ENCODE measurements at regions of chr3 and their contacts with region 1.

Region 1: DNA sequence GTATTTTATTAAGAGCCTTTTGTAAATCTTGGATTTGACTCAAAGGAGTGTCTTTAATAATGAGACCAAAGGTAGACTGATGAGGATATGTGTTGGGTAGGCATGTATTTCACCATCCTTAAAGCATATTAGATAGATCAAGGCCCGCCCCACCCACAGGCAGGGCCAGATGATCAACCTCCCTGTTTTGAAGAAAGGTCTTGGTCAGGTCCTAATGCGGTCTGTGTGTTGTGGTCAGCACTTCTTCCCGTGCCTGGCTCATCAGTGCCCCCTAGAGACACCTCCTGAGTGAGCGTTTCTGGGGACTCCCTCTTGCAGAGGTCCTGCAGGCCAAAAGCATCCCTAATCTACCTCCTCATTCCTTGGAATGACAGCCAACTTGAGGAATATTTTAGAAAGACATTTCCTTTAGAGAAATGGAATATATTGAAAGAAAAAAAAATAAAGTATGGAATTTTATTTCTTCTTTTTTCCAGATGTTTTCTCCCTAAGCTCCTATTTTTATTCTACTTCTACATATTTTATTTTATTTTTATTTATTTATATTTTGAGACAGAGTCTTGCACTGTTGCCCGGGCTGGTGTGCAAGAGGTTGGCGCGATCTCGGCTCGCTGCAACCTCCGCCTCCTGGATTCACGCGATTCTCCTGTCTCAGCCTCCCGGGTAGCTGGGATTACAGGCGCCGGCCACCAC is 6.0 kb downstream of the TM4SF4 start:
- DNase-seq: peak; percentile 75 to 84 (median 81)
- ATAC-seq: peak; percentile 84 to 98 (median 95)
- H3K4me3 ChIP-seq: no peak overlapping the region
- H3K27ac ChIP-seq: peak overlapping the region; percentile 35 to 79 (median 68)
- H3K4me1 ChIP-seq: peaks cover 0 to 19% (median 10%) of the 10 kb centered on the region in 12 donors
- H3K27me3 ChIP-seq: no peaks in the 10 kb centered on the region
- CTCF ChIP-seq: peak; percentile 74 to 94 (median 85)
- POLR2A ChIP-seq: no peak

Region 2: GRCh38 chr3:149114458-149114857 is 366.0 kb before region 1 on chr3:
- intact Hi-C with region 1: loop called in 1 of 10 experiments (anchors 5 kb)
- DNase-seq: no peak
- ATAC-seq: peak in 1 of 4 donors; percentile 65
- H3K4me3 ChIP-seq: no peak overlapping the region
- H3K27ac ChIP-seq: no peak overlapping the region
- H3K4me1 ChIP-seq: peaks cover 0 to 10% (median 0%) of the 10 kb centered on the region in 12 donors
- H3K27me3 ChIP-seq: no peaks in the 10 kb centered on the region
- CTCF ChIP-seq: no peak
- POLR2A ChIP-seq: no peak

Region 3: DNA sequence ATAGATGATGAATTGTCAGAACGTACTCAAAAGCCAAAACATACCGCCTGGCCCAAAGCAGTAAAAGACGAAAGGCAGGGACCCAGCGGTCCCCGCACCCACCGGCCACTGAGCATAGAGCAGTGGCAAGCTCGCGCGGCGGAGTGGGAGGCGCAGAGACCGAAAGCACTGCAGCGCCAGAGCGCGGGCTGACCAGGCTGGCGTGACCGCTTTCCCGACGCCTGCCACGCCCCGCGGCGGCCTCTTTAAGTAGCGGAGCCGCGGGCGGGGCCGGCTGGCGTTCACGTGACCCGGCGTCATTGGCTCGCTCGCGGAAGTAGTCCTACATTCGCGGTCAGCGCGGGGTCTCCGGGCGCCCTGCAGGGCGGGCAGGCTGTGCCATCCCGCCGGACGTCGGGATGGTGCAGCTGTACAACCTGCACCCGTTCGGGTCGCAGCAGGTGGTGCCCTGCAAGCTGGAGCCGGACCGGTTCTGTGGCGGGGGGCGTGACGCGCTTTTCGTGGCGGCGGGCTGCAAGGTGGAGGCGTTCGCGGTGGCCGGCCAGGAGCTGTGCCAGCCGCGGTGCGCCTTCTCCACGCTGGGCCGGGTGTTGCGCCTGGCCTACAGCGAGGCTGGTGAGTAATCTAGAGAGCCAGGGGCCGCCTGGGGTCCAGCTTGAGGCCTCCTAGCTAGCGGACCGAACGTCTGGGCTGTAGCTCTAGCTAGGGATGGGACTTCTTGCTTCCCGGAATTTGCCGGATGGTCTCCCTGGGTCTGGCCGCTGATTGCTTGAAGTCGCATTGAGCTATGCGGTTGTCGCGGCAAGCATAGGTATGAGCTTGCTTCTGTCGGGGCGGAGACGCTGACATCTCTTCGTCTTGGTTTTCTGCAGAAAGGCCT is 350.9 kb before region 1 on chr3 and contains the start of gene HPS3:
- intact Hi-C with region 1: loop called in 6 of 10 experiments (anchors 10 kb)
- DNase-seq: peak; percentile 93 to 96 (median 93)
- ATAC-seq: peak; percentile 98 to 100 (median 100)
- H3K4me3 ChIP-seq: peak within 1 kb of the TSS; percentile 65 to 99 (median 92)
- H3K27ac ChIP-seq: peak within 1 kb of the TSS; percentile 51 to 91 (median 76)
- H3K4me1 ChIP-seq: peaks cover 0 to 43% (median 22%) of the 10 kb centered on the region in 12 donors
- H3K27me3 ChIP-seq: no peaks in the 10 kb centered on the region
- CTCF ChIP-seq: peak in 2 of 12 donors; percentile 19 to 27
- POLR2A ChIP-seq: peak; percentile 48 to 97
- total RNA-seq, gene HPS3: 4.4 to 15.6 (median 6.3) TPM

Region 4: DNA sequence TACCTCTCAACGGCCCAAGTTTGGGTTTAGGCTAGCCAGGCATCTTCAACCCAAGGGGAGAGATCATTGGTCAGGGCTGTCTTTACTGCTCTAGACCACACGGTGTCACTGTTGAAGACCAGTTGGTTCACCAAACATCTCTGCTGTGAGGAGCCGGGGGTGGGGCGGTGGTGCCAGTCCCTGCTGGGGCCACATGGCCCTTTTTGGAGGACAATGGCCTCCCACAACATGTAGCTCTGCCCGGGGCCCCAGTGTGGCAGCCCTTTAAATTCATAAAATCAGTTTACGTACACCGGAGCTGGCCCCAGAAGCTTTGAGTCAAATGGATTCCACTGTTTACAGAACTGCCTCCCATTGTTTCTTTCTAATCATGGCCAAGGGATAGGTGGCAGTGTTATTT is 127.9 kb before region 1 on chr3:
- intact Hi-C with region 1: loop called in 9 of 10 experiments (anchors 1 to 5 kb)
- DNase-seq: peak; percentile 45 to 75 (median 53)
- ATAC-seq: peak in 3 of 4 donors; percentile 83 to 87 (median 86)
- H3K4me3 ChIP-seq: no peak overlapping the region
- H3K27ac ChIP-seq: peak overlapping the region in 6 of 12 donors; percentile 3 to 24 (median 14)
- H3K4me1 ChIP-seq: peaks cover 0 to 12% (median 1%) of the 10 kb centered on the region in 12 donors
- H3K27me3 ChIP-seq: no peaks in the 10 kb centered on the region
- CTCF ChIP-seq: peak; percentile 54 to 76 (median 66)
- POLR2A ChIP-seq: no peak

Region 5: GRCh38 chr3:149393345-149394160 is 86.9 kb before region 1 on chr3:
- intact Hi-C with region 1: loop called (anchors 1 to 5 kb)
- DNase-seq: peak; percentile 63 to 75 (median 74)
- ATAC-seq: peak; percentile 65 to 89 (median 82)
- H3K4me3 ChIP-seq: no peak overlapping the region
- H3K27ac ChIP-seq: peak overlapping the region in 6 of 12 donors; percentile 11 to 57 (median 24)
- H3K4me1 ChIP-seq: peaks cover 0 to 29% (median 8%) of the 10 kb centered on the region in 12 donors
- H3K27me3 ChIP-seq: no peaks in the 10 kb centered on the region
- CTCF ChIP-seq: peak; percentile 66 to 91 (median 81)
- POLR2A ChIP-seq: no peak